ENCODE measurements at regions of chr10 and their contacts with region 1.

Region 1: GRCh38 chr10:63629363-63630084 is 108.3 kb downstream of the REEP3 start:
- DNase-seq: peak; percentile 52 to 85 (median 80)
- ATAC-seq: peak; percentile 62
- H3K4me3 ChIP-seq: peak overlapping the region; percentile 71 to 81
- H3K4me3 Mint-ChIP-seq: peak overlapping the region; percentile 97
- H3K27ac ChIP-seq: peak overlapping the region; percentile 31 to 45
- H3K27ac Mint-ChIP-seq: peak overlapping the region; percentile 91
- H3K4me1 ChIP-seq: peaks cover 20% of the 10 kb centered on the region
- H3K4me1 Mint-ChIP-seq: peaks cover 29% of the 10 kb centered on the region
- H3K27me3 ChIP-seq: no peaks in the 10 kb centered on the region
- H3K27me3 Mint-ChIP-seq: no peaks in the 10 kb centered on the region
- CTCF ChIP-seq: peak; percentile 87

Region 2: GRCh38 chr10:62637249-62638061 is 992.1 kb before region 1 on chr10:
- CTCF ChIA-PET with region 1: no interaction called
- POLR2A ChIA-PET with region 1: no interaction called
- intact Hi-C with region 1: loop called in 1 of 2 experiments (anchors 1 kb)
- DNase-seq: peak; percentile 25 to 90 (median 68)
- ATAC-seq: peak; percentile 84
- H3K4me3 ChIP-seq: peak overlapping the region; percentile 48
- H3K4me3 Mint-ChIP-seq: no peak overlapping the region
- H3K27ac ChIP-seq: peak overlapping the region; percentile 77 to 88
- H3K27ac Mint-ChIP-seq: no peak overlapping the region
- H3K4me1 ChIP-seq: peaks cover 28% of the 10 kb centered on the region
- H3K4me1 Mint-ChIP-seq: peaks cover 14% of the 10 kb centered on the region
- H3K27me3 ChIP-seq: no peaks in the 10 kb centered on the region
- H3K27me3 Mint-ChIP-seq: no peaks in the 10 kb centered on the region
- CTCF ChIP-seq: no peak

Region 3: GRCh38 chr10:63166742-63167258 is 462.7 kb before region 1 on chr10:
- CTCF ChIA-PET with region 1: interaction called, 69 read pairs
- POLR2A ChIA-PET with region 1: interaction called, 3 read pairs
- intact Hi-C with region 1: loop called (anchors 1 to 2 kb)
- DNase-seq: peak in 3 of 9 experiments; percentile 17 to 79 (median 71)
- ATAC-seq: peak; percentile 75
- H3K4me3 ChIP-seq: no peak overlapping the region
- H3K4me3 Mint-ChIP-seq: no peak overlapping the region
- H3K27ac ChIP-seq: no peak overlapping the region
- H3K27ac Mint-ChIP-seq: no peak overlapping the region
- H3K4me1 ChIP-seq: no peaks in the 10 kb centered on the region
- H3K4me1 Mint-ChIP-seq: peaks cover 2% of the 10 kb centered on the region
- H3K27me3 ChIP-seq: no peaks in the 10 kb centered on the region
- H3K27me3 Mint-ChIP-seq: no peaks in the 10 kb centered on the region
- CTCF ChIP-seq: peak; percentile 83

Region 4: DNA sequence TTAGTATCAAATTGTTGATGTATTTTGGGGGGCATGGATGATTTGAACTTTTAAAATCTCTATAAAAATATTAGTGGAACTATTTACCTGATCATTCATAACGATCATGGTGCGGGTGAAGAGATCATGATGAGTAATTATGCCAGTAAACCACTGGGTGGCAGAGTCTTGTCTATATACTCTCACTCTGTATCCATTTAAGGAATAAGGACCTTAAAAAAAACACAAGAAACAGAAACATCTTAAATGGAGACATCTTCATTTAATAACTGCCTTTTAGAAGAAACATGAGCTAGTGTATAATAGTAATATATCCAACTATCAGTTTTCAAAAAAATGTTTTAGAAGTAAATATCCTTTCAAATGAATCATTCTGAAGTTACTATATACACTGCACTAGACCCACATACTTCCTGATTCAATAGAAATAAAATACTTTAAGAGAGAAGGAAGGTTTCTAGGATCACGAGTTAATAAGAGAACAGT is 412.4 kb before region 1 on chr10:
- CTCF ChIA-PET with region 1: interaction called, 66 read pairs
- POLR2A ChIA-PET with region 1: interaction called, 3 read pairs
- intact Hi-C with region 1: loop called (anchors 1 to 2 kb)
- DNase-seq: peak in 3 of 9 experiments; percentile 20 to 77 (median 62)
- ATAC-seq: peak; percentile 86
- H3K4me3 ChIP-seq: no peak overlapping the region
- H3K4me3 Mint-ChIP-seq: no peak overlapping the region
- H3K27ac ChIP-seq: no peak overlapping the region
- H3K27ac Mint-ChIP-seq: no peak overlapping the region
- H3K4me1 ChIP-seq: peaks cover 9% of the 10 kb centered on the region
- H3K4me1 Mint-ChIP-seq: peaks cover 52% of the 10 kb centered on the region
- H3K27me3 ChIP-seq: no peaks in the 10 kb centered on the region
- H3K27me3 Mint-ChIP-seq: no peaks in the 10 kb centered on the region
- CTCF ChIP-seq: peak; percentile 93

Region 5: DNA sequence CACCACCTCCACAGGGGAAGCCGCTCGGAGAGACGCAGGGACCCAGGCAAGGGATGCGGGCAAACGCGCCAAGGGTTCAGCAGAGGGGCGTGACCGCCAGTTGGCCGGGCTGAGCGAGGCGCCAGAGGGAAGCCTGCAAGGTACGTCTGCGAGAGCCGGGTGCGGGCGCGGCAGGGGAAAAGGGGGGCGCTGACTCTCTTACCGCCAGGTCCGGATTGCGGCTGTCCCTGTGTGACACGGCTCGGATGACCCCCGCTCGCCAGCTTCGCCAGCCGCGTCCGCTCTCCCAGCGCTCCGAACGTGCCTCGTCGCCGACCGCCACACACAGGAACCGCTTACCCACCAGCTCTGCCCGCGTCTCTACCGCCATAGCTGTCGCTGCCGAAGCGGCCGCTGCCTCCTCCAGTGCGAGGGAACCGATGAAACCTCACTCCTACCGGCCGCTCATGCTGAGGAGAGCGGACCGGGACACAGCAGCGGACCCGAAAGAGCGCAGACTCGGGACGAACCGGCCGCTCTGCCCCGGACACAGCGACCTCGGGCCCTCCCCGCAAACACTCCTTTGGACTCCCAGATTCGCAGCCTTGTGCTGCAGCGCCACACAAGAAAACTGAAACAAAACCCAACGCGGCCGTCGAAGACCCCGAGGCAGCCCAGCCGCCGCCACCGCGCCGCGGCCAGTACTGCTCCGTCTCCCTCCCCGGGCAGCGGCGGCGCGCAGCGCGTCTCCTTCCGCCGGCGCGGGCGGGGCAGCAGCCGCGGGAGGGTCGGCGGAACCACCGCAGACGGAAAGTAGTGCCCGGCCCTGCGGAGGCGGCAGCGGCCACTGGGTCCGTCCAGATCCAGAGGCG is 164.0 kb before region 1 on chr10 and contains the start of gene JMJD1C:
- CTCF ChIA-PET with region 1: interaction called, 4 read pairs
- POLR2A ChIA-PET with region 1: no interaction called
- intact Hi-C with region 1: loop called (anchors 10 kb)
- DNase-seq: peak; percentile 24 to 80 (median 59)
- ATAC-seq: peak; percentile 69
- H3K4me3 ChIP-seq: peak within 1 kb of the TSS; percentile 89 to 92
- H3K4me3 Mint-ChIP-seq: peak within 1 kb of the TSS; percentile 89
- H3K27ac ChIP-seq: peak within 1 kb of the TSS; percentile 65 to 79
- H3K27ac Mint-ChIP-seq: peak within 1 kb of the TSS; percentile 91
- H3K4me1 ChIP-seq: peaks cover 8% of the 10 kb centered on the region
- H3K4me1 Mint-ChIP-seq: peaks cover 33% of the 10 kb centered on the region
- H3K27me3 ChIP-seq: no peaks in the 10 kb centered on the region
- H3K27me3 Mint-ChIP-seq: no peaks in the 10 kb centered on the region
- CTCF ChIP-seq: no peak
- total RNA-seq, gene JMJD1C: 377 to 392 TPM

Region 6: DNA sequence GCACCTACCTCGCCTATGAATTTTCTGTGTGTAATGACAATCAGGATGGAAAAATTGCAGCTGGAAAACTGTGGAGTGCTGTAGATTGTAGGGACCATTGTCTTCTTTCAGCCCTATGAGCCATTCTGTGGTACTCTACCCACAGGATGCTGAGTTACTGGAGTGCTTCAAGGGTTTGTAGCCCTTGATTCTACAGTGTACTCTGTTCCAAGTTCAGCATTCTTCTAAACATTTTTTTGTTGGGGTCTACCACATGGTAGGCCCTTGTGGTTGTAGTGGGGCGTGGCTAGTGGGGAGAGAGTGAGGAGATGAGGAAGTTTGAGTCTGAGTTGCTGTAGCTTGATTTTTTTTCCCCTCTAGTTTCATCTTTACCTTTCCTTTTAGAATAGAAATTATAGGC is 74.9 kb before region 1 on chr10:
- CTCF ChIA-PET with region 1: no interaction called
- POLR2A ChIA-PET with region 1: no interaction called
- intact Hi-C with region 1: loop called in 1 of 2 experiments (anchors 2 kb)
- DNase-seq: peak; percentile 35 to 89 (median 63)
- ATAC-seq: peak; percentile 100
- H3K4me3 ChIP-seq: no peak overlapping the region
- H3K4me3 Mint-ChIP-seq: no peak overlapping the region
- H3K27ac ChIP-seq: peak overlapping the region in 1 of 2 experiments; percentile 45
- H3K27ac Mint-ChIP-seq: peak overlapping the region; percentile 67
- H3K4me1 ChIP-seq: peaks cover 17% of the 10 kb centered on the region
- H3K4me1 Mint-ChIP-seq: peaks cover 24% of the 10 kb centered on the region
- H3K27me3 ChIP-seq: no peaks in the 10 kb centered on the region
- H3K27me3 Mint-ChIP-seq: no peaks in the 10 kb centered on the region
- CTCF ChIP-seq: no peak

Measured in CD8-positive, alpha-beta T cell (primary cell).